ENCODE measurements at regions of chr3 and their contacts with region 1.

Region 1: DNA sequence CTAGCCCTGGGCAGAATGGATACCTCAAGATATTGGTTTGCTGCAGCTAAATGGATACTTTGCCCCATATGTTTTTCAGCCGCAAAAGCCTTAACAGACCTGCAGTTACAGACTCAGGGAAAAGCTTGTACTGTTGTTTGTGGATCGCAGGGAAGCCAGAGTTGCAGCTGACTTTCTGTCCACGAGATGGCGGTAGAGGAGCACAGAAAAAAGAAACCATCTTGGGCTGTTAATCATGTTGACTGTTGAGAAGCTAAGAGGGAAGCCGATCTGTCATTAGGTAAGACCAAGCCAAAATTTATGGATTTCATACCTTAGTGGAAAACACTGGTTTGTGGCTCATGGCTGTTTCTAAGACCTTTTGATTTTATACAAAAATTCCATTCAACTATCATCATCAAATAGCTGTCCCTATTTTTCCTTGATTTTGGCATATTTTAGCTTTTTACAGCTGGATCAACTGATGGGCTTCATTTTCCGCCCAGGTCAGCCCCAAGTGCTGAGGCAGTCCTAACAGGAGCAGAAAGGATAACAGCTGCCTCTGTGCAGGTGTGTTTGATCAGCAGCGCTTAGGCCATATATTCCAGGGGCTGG is 205.7 kb upstream of the ZPLD1 start:
- DNase-seq: peak; percentile 55 to 83 (median 75)
- ATAC-seq: peak; percentile 91
- H3K4me3 ChIP-seq: no peak overlapping the region
- H3K4me3 Mint-ChIP-seq: no peak overlapping the region
- H3K27ac ChIP-seq: no peak overlapping the region
- H3K27ac Mint-ChIP-seq: no peak overlapping the region
- H3K4me1 ChIP-seq: peaks cover 5% of the 10 kb centered on the region
- H3K4me1 Mint-ChIP-seq: peaks cover 12% of the 10 kb centered on the region
- H3K27me3 ChIP-seq: no peaks in the 10 kb centered on the region
- H3K27me3 Mint-ChIP-seq: peaks cover 7% of the 10 kb centered on the region
- CTCF ChIP-seq: peak; percentile 91

Region 2: GRCh38 chr3:100941041-100941440 is 1288.1 kb before region 1 on chr3:
- CTCF ChIA-PET with region 1: no interaction called
- POLR2A ChIA-PET with region 1: no interaction called
- intact Hi-C with region 1: no loop called
- DNase-seq: no peak
- ATAC-seq: no peak
- H3K4me3 ChIP-seq: no peak overlapping the region
- H3K4me3 Mint-ChIP-seq: no peak overlapping the region
- H3K27ac ChIP-seq: no peak overlapping the region
- H3K27ac Mint-ChIP-seq: no peak overlapping the region
- H3K4me1 ChIP-seq: no peaks in the 10 kb centered on the region
- H3K4me1 Mint-ChIP-seq: no peaks in the 10 kb centered on the region
- H3K27me3 ChIP-seq: no peaks in the 10 kb centered on the region
- H3K27me3 Mint-ChIP-seq: peaks cover 2% of the 10 kb centered on the region
- CTCF ChIP-seq: no peak

Region 3: GRCh38 chr3:101791778-101792177 is 437.4 kb before region 1 on chr3:
- CTCF ChIA-PET with region 1: interaction called, 16 read pairs
- POLR2A ChIA-PET with region 1: no interaction called
- intact Hi-C with region 1: no loop called
- DNase-seq: no peak
- ATAC-seq: no peak
- H3K4me3 ChIP-seq: no peak overlapping the region
- H3K4me3 Mint-ChIP-seq: no peak overlapping the region
- H3K27ac ChIP-seq: no peak overlapping the region
- H3K27ac Mint-ChIP-seq: peak overlapping the region; percentile 37
- H3K4me1 ChIP-seq: peaks cover 16% of the 10 kb centered on the region
- H3K4me1 Mint-ChIP-seq: peaks cover 78% of the 10 kb centered on the region
- H3K27me3 ChIP-seq: no peaks in the 10 kb centered on the region
- H3K27me3 Mint-ChIP-seq: no peaks in the 10 kb centered on the region
- CTCF ChIP-seq: no peak

Region 4: DNA sequence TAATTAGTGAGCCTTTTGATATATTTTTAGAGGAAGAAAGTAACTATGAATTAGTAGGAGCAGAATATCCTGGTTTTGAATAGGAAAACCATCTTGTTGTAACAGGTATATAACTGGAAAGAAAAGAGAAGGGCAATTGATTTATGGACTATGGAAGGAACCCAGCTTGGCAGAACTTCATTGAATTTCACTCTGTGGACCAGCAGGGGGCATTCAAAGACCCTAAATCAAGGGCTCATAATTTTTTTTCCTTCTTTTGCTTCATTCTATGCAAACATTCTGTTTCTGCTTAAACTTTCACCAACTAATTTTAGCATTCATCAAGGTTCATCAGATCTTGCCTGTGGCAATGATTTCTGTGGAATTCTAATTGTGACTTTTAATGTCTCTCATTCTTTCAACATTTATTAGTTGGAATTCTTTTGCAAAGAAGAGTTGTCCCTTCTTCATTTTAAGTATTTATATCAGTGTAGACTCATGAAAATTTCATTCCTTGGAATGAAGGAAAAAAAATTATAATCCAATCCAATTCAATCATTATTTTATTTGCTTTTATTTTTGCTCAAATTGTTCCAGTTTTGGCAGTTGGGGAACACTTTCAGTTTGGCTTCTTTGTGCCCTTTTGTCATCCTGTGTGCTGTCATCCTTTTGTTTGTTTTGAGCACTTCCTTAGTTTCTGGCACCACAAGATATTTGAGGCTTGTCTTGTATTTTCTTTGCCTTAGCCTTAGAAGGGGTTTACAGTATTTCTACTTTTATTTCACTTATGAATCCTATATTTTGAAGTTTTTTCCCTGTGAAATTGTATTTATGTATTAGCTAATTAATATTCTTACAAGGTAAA is 419.8 kb before region 1 on chr3:
- CTCF ChIA-PET with region 1: interaction called, 400 read pairs
- POLR2A ChIA-PET with region 1: interaction called, 7 read pairs
- intact Hi-C with region 1: loop called (anchors 1 kb)
- DNase-seq: peak in 6 of 9 experiments; percentile 14 to 77 (median 39)
- ATAC-seq: peak; percentile 78
- H3K4me3 ChIP-seq: no peak overlapping the region
- H3K4me3 Mint-ChIP-seq: peak overlapping the region; percentile 2
- H3K27ac ChIP-seq: peak overlapping the region in 1 of 2 experiments; percentile 17
- H3K27ac Mint-ChIP-seq: peak overlapping the region; percentile 79
- H3K4me1 ChIP-seq: peaks cover 14% of the 10 kb centered on the region
- H3K4me1 Mint-ChIP-seq: peaks cover 36% of the 10 kb centered on the region
- H3K27me3 ChIP-seq: no peaks in the 10 kb centered on the region
- H3K27me3 Mint-ChIP-seq: no peaks in the 10 kb centered on the region
- CTCF ChIP-seq: peak; percentile 73

Region 5: DNA sequence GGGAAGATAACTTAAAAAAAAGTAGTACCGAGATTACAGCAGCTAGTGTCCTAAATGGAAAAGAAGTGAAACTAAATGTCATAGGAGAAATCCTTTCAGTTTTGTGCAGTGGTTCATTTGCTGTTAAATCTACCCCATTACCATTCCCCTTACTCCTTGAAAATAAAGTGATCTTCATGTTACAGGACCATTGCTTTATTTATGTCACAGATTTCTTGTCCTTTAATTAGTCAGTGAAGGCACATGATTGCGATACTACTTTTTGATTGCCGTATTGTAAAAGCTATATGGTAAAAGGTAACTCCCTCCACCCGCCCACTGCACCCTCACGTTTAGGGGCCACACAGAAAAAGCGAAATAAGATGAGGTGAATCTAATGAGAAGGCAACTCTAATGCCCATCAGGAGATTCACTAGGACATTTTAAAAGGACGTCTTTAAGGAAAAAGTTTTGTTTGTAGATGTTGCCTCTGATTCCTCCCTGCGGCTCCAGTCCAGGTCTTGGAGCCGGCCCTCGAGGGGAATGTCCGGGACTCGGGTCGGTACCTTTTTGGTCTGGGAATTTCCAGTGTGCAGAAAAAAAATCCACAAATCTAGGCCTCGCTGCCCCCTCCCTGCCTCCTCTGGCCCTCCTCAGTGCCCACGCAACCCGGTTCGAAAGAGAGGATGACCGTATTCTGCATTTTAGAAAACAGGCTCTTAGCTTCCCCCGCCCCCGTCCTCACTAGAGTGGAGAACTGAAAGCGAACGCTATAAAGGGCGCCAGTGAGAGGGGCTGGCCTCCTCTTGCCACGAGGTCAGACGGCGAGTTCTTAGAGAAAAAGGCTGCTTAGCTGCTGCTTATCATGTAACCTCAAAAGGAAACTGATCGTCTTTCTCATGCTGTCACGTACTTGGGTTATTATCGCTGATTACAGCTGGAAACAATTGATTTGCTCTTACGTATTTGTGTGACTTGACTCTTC is 401.7 kb before region 1 on chr3:
- CTCF ChIA-PET with region 1: interaction called, 27 read pairs
- POLR2A ChIA-PET with region 1: interaction called, 3 read pairs
- intact Hi-C with region 1: no loop called
- DNase-seq: peak; percentile 54 to 92 (median 79)
- ATAC-seq: peak; percentile 84
- H3K4me3 ChIP-seq: peak overlapping the region; percentile 61 to 65
- H3K4me3 Mint-ChIP-seq: peak overlapping the region; percentile 94
- H3K27ac ChIP-seq: peak overlapping the region; percentile 72 to 90
- H3K27ac Mint-ChIP-seq: peak overlapping the region; percentile 98
- H3K4me1 ChIP-seq: peaks cover 35% of the 10 kb centered on the region
- H3K4me1 Mint-ChIP-seq: peaks cover 61% of the 10 kb centered on the region
- H3K27me3 ChIP-seq: no peaks in the 10 kb centered on the region
- H3K27me3 Mint-ChIP-seq: no peaks in the 10 kb centered on the region
- CTCF ChIP-seq: no peak

Region 6: DNA sequence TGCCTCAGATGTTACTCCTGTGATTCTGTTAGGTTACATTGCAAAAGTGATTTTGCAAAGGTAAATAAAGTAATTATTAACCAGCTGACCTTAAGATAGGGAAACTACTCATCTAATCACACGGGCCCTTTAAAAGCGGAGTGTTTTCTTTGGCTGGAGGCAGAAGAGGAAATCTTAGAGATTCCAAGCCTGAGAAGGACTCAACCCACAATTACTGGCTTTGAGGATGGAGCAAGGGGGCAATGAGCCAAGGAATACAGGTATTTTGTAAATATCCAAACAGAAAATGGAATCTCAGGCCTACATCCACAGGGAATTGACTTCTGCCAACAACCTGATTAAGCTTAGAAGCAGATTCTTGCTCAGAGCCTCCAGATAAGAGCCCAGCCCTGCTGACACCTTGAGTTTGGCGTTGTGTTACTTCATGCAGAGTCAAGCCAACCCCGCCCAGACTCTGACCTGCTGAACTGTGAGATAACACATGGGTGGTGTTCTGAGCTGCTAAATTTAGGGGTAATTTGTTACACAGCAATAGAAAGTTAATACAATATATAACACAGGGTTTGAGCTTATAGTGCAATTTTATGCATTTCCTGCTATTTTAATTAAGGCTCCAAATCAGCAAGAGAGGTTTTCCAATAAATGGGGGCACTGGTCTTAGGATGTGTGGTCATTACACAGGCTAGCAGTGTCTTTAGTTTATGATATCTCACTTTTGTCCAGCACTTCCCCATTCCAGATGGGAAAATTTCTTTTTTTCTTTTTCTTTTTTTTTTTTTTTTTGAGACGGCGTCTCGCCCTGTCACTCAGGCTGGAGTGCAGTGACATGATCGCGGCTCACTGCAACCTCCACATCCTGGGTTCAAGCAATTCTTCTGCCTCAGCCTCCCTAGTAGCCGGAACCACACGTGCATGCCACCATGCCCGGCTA is 360.4 kb before region 1 on chr3:
- CTCF ChIA-PET with region 1: interaction called, 10 read pairs
- POLR2A ChIA-PET with region 1: no interaction called
- intact Hi-C with region 1: no loop called
- DNase-seq: no peak
- ATAC-seq: no peak
- H3K4me3 ChIP-seq: no peak overlapping the region
- H3K4me3 Mint-ChIP-seq: no peak overlapping the region
- H3K27ac ChIP-seq: no peak overlapping the region
- H3K27ac Mint-ChIP-seq: no peak overlapping the region
- H3K4me1 ChIP-seq: no peaks in the 10 kb centered on the region
- H3K4me1 Mint-ChIP-seq: no peaks in the 10 kb centered on the region
- H3K27me3 ChIP-seq: no peaks in the 10 kb centered on the region
- H3K27me3 Mint-ChIP-seq: no peaks in the 10 kb centered on the region
- CTCF ChIP-seq: no peak

Region 7: DNA sequence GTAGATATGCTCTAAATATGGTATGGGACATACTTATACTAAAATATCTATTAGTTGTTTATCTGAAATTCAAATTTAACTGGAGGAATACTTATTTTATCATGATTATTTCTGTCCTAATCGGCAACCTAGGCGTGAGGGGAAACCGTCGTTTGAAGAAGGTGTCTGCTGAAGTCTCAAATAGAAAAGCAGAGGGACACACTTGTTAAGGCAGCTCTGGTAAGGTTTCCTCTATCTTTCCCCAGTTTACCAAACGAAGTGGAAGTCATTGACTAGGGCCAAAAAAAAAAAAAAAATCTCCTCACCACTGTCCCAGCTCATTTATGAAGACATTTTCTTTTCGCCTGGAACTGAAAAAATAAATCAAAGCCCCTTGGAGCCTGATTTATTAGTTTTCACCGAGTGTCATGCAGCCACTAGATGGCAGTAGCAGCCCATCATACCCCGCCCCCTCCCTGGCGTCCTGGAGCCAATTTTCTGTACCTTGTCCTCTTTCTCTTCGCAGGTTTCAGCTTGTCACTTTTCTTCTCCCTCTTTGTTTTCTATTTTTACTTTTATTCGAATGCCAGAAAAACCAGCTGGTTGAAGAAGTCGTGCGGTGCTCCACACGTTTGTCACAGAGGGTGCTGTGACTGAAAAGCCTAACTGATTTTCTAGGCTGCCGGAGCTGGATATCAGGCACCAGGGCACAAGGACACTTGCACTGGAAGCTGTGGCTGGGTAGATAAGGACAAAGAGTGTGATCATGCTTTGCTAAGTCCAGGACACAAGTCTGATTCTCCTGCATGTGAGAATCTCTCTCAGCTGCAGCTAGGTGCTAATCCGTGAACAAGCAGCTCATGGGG is 444.3 kb after region 1 on chr3:
- CTCF ChIA-PET with region 1: interaction called, 17 read pairs
- POLR2A ChIA-PET with region 1: no interaction called
- intact Hi-C with region 1: no loop called
- DNase-seq: peak; percentile 4 to 62 (median 53)
- ATAC-seq: no peak
- H3K4me3 ChIP-seq: no peak overlapping the region
- H3K4me3 Mint-ChIP-seq: no peak overlapping the region
- H3K27ac ChIP-seq: no peak overlapping the region
- H3K27ac Mint-ChIP-seq: no peak overlapping the region
- H3K4me1 ChIP-seq: no peaks in the 10 kb centered on the region
- H3K4me1 Mint-ChIP-seq: peaks cover 4% of the 10 kb centered on the region
- H3K27me3 ChIP-seq: no peaks in the 10 kb centered on the region
- H3K27me3 Mint-ChIP-seq: peaks cover 7% of the 10 kb centered on the region
- CTCF ChIP-seq: peak; percentile 78